ENCODE measurements at regions of chr12 and their contacts with region 1.

Region 1: DNA sequence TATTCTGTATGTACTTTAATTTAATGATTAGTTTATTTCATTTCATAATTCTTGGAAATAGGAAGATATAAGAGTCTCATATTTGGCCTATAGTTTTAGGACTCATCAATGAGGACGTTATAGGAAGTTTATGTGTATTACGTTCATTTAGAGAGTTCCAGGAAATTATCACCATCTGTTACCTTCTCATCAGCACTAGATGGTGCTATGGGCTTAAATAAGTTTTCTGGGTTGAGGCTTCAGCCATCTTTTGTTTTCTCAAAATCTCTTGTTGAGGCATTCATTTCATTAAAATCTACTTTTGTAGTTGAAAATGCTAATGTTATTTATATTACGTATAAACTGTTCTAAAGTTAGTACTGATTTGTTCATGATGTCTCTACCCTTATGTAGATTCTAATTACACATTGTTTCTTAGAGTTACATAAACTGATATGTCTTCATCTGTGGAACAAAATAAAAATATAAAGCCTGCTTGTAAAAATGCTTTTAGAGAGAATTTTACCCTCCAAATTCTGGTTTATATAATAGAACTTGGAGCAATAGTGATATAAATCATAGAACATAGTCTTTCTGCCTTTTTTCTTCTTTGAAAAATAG is 89.2 kb downstream of the CFAP54 start:
- DNase-seq: peak; percentile 20
- H3K4me3 Mint-ChIP-seq: no peak overlapping the region
- H3K27ac Mint-ChIP-seq: no peak overlapping the region
- H3K4me1 Mint-ChIP-seq: no peaks in the 10 kb centered on the region
- H3K27me3 Mint-ChIP-seq: no peaks in the 10 kb centered on the region
- CTCF ChIP-seq: peak; percentile 34

Region 2: GRCh38 chr12:97308576-97309198 is 730.1 kb after region 1 on chr12:
- CTCF ChIA-PET with region 1: no interaction called
- intact Hi-C with region 1: loop called (anchors 2 kb)
- DNase-seq: peak; percentile 35
- H3K4me3 Mint-ChIP-seq: no peak overlapping the region
- H3K27ac Mint-ChIP-seq: no peak overlapping the region
- H3K4me1 Mint-ChIP-seq: peaks cover 8% of the 10 kb centered on the region
- H3K27me3 Mint-ChIP-seq: peaks cover 17% of the 10 kb centered on the region
- CTCF ChIP-seq: peak; percentile 64